ENCODE measurements at regions of chr18 and their contacts with region 1.

Region 1: DNA sequence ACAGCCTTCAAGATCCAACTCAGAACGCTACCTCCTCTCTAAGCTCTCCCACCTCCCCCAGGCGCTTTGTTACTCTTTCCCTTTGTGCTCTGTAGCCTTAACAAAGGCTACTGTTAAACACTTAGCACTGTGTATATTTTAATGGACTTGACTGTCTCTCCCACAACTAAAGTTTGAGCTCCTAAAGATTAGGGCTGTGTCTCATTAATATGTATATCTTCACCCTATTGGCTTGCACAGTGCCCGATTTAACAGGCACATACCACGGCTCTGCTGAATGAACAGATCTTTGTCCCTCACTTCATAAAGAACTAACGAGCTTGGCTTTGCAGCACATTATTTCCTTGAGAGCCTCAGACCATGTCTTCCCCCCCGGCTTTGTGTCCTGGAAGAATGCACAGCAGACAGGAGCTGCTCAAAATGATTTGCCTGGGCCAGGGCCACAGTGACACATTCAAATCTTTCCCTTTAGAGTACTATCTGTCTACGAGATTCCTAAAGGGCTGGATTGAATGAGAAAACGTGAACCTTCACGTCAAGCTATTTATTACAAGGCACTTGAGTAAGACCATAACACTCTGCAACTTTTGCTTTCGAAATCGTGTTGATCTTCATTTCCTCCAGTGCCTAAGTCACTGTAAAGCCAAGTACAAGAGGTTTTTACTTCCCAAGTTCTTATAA is 22.1 kb downstream of the ABHD3 start:
- DNase-seq: peak; percentile 36
- ATAC-seq: peak; percentile 89
- H3K4me3 Mint-ChIP-seq: no peak overlapping the region
- H3K27ac Mint-ChIP-seq: no peak overlapping the region
- H3K4me1 Mint-ChIP-seq: peaks cover 11% of the 10 kb centered on the region
- H3K27me3 Mint-ChIP-seq: no peaks in the 10 kb centered on the region

Region 2: GRCh38 chr18:21650311-21650710 is 32.2 kb before region 1 on chr18:
- CTCF ChIA-PET with region 1: no interaction called
- POLR2A ChIA-PET with region 1: no interaction called
- intact Hi-C with region 1: loop called in 1 of 2 experiments (anchors 5 kb)
- DNase-seq: no peak
- ATAC-seq: no peak
- H3K4me3 Mint-ChIP-seq: no peak overlapping the region
- H3K27ac Mint-ChIP-seq: no peak overlapping the region
- H3K4me1 Mint-ChIP-seq: no peaks in the 10 kb centered on the region
- H3K27me3 Mint-ChIP-seq: no peaks in the 10 kb centered on the region

Region 3: GRCh38 chr18:21669736-21670135 is 12.8 kb before region 1 on chr18:
- CTCF ChIA-PET with region 1: interaction called, 3 read pairs
- POLR2A ChIA-PET with region 1: no interaction called
- intact Hi-C with region 1: loop called in 1 of 2 experiments (anchors 2 kb)
- DNase-seq: no peak
- ATAC-seq: no peak
- H3K4me3 Mint-ChIP-seq: no peak overlapping the region
- H3K27ac Mint-ChIP-seq: no peak overlapping the region
- H3K4me1 Mint-ChIP-seq: no peaks in the 10 kb centered on the region
- H3K27me3 Mint-ChIP-seq: no peaks in the 10 kb centered on the region

Region 4: DNA sequence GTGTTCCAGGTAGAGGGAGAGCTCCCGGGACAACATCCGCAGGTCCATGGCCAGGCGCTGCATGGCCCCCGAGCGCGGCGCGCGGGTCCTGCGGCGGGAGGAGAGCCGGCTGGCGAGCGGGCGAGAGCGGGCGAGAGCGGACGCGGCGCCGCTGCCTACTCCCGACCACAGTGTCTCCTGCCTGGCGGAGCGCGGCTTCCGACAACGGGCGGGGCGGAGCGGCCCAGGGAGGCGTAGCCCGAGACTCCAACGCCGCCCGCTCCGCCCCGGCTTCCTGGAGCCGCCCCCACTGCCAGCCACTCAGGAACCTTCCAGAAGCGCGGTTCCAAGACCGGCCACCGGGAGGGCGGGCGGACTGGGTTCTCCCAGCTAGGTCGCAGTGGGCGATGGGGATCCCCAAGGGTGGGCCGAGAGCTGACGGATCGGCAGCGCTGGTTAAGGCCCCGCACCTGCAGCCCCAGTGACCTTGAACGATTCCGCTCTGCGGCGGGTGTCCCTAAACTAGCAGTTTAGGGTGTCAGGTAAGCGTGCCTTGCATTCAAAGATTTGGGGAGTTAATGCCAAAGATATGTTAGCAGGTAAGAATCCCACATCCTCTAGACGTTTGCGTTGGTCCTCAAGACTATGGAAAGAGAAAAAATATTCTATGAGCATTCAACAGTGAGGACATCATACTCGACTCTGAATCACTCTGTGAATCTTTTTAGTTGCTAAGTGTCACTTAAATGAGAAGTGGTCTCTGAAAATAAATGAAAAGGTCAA is 22.3 kb after region 1 on chr18 and contains the start of gene ABHD3:
- CTCF ChIA-PET with region 1: interaction called, 6 read pairs
- POLR2A ChIA-PET with region 1: no interaction called
- intact Hi-C with region 1: loop called in 1 of 2 experiments (anchors 1 kb)
- DNase-seq: peak; percentile 93
- ATAC-seq: peak; percentile 95
- H3K4me3 Mint-ChIP-seq: peak within 1 kb of the TSS; percentile 87
- H3K27ac Mint-ChIP-seq: peak within 1 kb of the TSS; percentile 93
- H3K4me1 Mint-ChIP-seq: peaks cover 24% of the 10 kb centered on the region
- H3K27me3 Mint-ChIP-seq: no peaks in the 10 kb centered on the region
- total RNA-seq, gene ABHD3: 13.7 to 14.3 TPM

Region 5: GRCh38 chr18:21740724-21741510 is 58.4 kb after region 1 on chr18 and contains the start of gene MIB1:
- CTCF ChIA-PET with region 1: no interaction called
- POLR2A ChIA-PET with region 1: no interaction called
- intact Hi-C with region 1: loop called (anchors 2 to 5 kb)
- DNase-seq: peak; percentile 62
- ATAC-seq: peak; percentile 73
- H3K4me3 Mint-ChIP-seq: peak within 1 kb of the TSS; percentile 93
- H3K27ac Mint-ChIP-seq: peak within 1 kb of the TSS; percentile 96
- H3K4me1 Mint-ChIP-seq: peaks cover 40% of the 10 kb centered on the region
- H3K27me3 Mint-ChIP-seq: no peaks in the 10 kb centered on the region
- total RNA-seq, gene MIB1: 24.7 to 33.6 TPM

Region 6: GRCh38 chr18:21991081-21991581 is 308.6 kb after region 1 on chr18:
- CTCF ChIA-PET with region 1: no interaction called
- POLR2A ChIA-PET with region 1: no interaction called
- intact Hi-C with region 1: no loop called
- DNase-seq: no peak
- ATAC-seq: no peak
- H3K4me3 Mint-ChIP-seq: no peak overlapping the region
- H3K27ac Mint-ChIP-seq: no peak overlapping the region
- H3K4me1 Mint-ChIP-seq: no peaks in the 10 kb centered on the region
- H3K27me3 Mint-ChIP-seq: no peaks in the 10 kb centered on the region

Measured in activated CD4-positive, alpha-beta T cell treated with anti-CD3 and anti-CD28 coated beads for 36 hours (primary cell).